Dorsolateral prefrontal cortex (tissue), 120 donors: ENCODE measurements at regions of chr11 and their contacts with region 1.

Region 1: DNA sequence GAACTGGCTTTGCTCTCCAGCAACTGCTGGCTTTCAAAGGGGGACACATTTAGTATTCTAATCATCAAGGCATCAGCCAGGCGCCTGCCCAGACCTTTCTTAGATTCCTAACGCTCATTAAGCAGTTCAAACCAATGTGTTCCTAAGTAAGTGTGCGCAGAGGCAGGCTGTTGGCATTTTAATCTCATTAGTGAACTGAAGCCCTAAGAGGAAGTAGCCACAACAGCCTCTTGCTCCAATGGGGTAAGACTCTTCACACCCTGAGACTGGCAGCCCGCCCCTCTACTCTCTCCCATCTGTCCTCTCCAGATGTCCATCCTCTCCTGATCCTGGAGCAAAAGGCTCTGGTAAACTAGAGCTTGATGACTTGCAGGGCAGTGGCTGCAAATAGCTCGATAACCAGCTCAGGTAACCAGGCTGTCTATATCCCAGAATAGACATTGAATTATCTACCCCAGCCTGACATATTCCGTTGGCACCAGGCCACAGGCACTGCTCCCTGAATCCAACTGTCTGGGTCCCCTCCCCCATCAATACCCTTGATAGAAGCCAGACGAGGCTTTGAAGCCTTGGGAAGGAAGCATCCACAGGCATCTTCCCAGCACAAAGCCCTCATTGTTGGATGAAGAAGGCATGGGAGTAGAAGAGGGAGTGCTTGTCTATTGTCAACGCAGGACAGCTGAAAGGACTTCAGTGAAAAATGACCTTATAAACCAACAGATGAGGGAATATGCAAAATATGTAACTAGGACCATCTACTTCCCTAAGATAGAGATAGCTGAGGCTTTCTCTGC is 321.1 kb downstream of the TENM4 start:
- DNase-seq: peak in 7 of 10 donors; percentile 26 to 72 (median 47)
- H3K4me3 ChIP-seq: peak overlapping the region in 2 of 59 donors; percentile 10 to 32
- H3K27ac ChIP-seq: peak overlapping the region in 6 of 59 donors; percentile 2 to 49 (median 10)
- H3K27me3 ChIP-seq: no peaks in the 10 kb centered on the region
- CTCF ChIP-seq: peak in 2 of 56 donors; percentile 13 to 34

Region 2: GRCh38 chr11:79007771-79008402 is 111.8 kb before region 1 on chr11:
- intact Hi-C with region 1: no loop called
- DNase-seq: peak in 1 of 10 donors; percentile 56
- H3K4me3 ChIP-seq: no peak overlapping the region
- H3K27ac ChIP-seq: no peak overlapping the region
- H3K27me3 ChIP-seq: no peaks in the 10 kb centered on the region
- CTCF ChIP-seq: no peak

Region 3: GRCh38 chr11:79076526-79077115 is 43.1 kb before region 1 on chr11:
- intact Hi-C with region 1: loop called in 1 of 2 experiments (anchors 2 kb)
- DNase-seq: peak in 3 of 10 donors; percentile 14 to 49 (median 45)
- H3K4me3 ChIP-seq: no peak overlapping the region
- H3K27ac ChIP-seq: no peak overlapping the region
- H3K27me3 ChIP-seq: no peaks in the 10 kb centered on the region
- CTCF ChIP-seq: peak in 55 of 56 donors; percentile 35 to 70 (median 55)

Region 4: GRCh38 chr11:79253280-79253679 is 133.6 kb after region 1 on chr11:
- intact Hi-C with region 1: loop called in 1 of 2 experiments (anchors 5 kb)
- DNase-seq: peak; percentile 14 to 92 (median 80)
- H3K4me3 ChIP-seq: peak overlapping the region in 12 of 59 donors; percentile 0 to 33 (median 24)
- H3K27ac ChIP-seq: peak overlapping the region in 39 of 59 donors; percentile 3 to 83 (median 50)
- H3K27me3 ChIP-seq: no peaks in the 10 kb centered on the region
- CTCF ChIP-seq: peak in 3 of 56 donors; percentile 15 to 31 (median 22)